ENCODE measurements at regions of chr1 and their contacts with region 1.

Region 1: GRCh38 chr1:109643385-109644230 is 12.3 kb upstream of the GSTM4 start:
- DNase-seq: peak; percentile 81
- H3K4me3 ChIP-seq: no peak overlapping the region
- H3K27ac ChIP-seq: no peak overlapping the region
- H3K4me1 ChIP-seq: no peaks in the 10 kb centered on the region
- H3K27me3 ChIP-seq: no peaks in the 10 kb centered on the region

Region 2: DNA sequence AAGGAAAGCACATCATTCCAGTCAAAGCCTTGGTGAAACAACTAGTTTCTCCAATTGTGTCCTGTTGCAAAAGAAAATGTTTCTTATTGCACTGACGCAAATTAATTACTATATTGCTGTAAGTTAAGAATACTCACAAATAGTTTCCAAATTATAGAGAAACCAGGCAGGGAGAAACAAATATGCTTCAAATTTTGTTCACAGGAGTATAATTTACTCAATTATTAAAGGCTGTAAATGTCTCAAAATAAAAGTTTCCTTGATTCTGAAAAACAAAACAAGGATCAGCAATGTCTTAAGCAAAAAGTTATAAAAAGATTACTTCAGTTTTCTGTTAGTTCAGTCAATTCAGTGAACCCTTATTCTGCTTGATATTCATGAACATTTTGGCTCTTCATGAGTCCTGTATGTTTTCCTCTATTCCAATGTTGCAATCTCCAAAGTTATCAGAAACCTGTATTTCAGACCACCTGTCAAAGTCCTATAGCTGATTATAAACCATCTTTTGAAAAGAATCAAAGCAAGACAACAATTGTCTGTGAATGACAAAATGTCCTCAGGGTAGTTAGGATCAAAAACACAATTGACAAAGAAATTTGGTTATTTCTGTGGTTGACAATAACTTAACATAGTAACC is 189.0 kb before region 1 on chr1:
- in situ Hi-C with region 1: no loop called
- DNase-seq: no peak
- H3K4me3 ChIP-seq: no peak overlapping the region
- H3K27ac ChIP-seq: no peak overlapping the region
- H3K4me1 ChIP-seq: no peaks in the 10 kb centered on the region
- H3K27me3 ChIP-seq: peaks cover 8% of the 10 kb centered on the region

Region 3: DNA sequence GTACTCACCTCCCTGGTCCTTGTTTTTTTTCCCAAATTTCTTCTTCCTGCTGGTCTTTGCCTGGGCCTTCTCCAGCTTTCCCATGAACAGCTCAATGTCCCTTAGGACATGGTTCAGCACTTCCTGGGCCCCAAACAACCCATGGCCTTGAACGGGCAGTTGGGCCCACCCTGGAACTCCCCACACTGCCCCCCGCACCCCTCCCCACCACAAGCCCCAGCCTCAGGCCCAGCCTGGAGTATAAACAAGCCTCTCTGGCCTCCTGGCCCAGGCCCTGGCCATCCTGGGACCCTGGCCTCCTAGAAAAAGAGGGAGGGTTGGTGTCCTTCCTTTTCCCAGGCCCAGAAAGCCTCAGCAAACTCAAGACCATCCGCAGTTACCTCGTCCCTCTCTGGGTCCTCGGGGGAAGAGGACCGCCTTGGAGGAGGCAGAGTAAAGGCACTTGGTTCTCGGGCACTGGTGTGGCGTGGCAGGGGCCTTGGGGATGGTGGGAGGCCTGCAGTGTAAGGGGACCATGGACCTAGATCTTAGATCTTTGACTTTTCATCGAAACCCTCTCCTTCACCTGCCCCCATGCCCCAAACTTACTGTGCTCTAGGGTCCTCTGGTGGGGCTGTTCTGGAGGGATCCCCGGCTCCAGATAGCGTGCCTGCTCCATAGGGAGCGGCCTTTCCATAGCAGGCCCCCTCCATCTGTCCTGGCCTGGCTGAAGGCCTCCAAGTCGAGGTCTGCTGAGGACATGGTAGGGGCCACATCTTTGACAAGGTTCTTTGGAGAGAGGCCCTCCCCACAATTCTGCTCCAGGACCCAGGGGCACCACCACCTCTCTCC is 114.5 kb after region 1 on chr1:
- in situ Hi-C with region 1: loop called (anchors 10 kb)
- DNase-seq: no peak
- H3K4me3 ChIP-seq: no peak overlapping the region
- H3K27ac ChIP-seq: no peak overlapping the region
- H3K4me1 ChIP-seq: no peaks in the 10 kb centered on the region
- H3K27me3 ChIP-seq: no peaks in the 10 kb centered on the region

Region 4: GRCh38 chr1:109984456-109985275 is 341.1 kb after region 1 on chr1 and contains the start of gene AHCYL1:
- in situ Hi-C with region 1: loop called (anchors 10 kb)
- DNase-seq: peak; percentile 100
- H3K4me3 ChIP-seq: peak within 1 kb of the TSS; percentile 99
- H3K27ac ChIP-seq: peak within 1 kb of the TSS; percentile 97
- H3K4me1 ChIP-seq: peaks cover 44% of the 10 kb centered on the region
- H3K27me3 ChIP-seq: no peaks in the 10 kb centered on the region
- total RNA-seq, gene AHCYL1: 47.6 and 49.3 TPM in 2 replicates